Endothelial cell of umbilical vein (primary cell): ENCODE measurements at regions of chr18 and their contacts with region 1.

Region 1: GRCh38 chr18:48951448-48952286 is 902 bp upstream of the SMAD7 start:
- DNase-seq: peak; percentile 91
- H3K4me3 ChIP-seq: peak overlapping the region; percentile 58 to 83 (median 79)
- H3K27ac ChIP-seq: peak overlapping the region; percentile 97
- H3K4me1 ChIP-seq: peaks cover 47% of the 10 kb centered on the region
- H3K27me3 ChIP-seq: no peaks in the 10 kb centered on the region
- CTCF ChIP-seq: peak in 1 of 2 donors; percentile 28
- POLR2A ChIP-seq: peak; percentile 49

Region 2: GRCh38 chr18:48538531-48539405 is 412.9 kb before region 1 on chr18 and contains the start of gene CTIF:
- CTCF ChIA-PET with region 1: no interaction called
- POLR2A ChIA-PET with region 1: no interaction called
- dilution Hi-C with region 1: no loop called
- intact Hi-C with region 1: loop called (anchors 5 kb)
- DNase-seq: peak; percentile 96
- H3K4me3 ChIP-seq: peak within 1 kb of the TSS; percentile 73 to 86 (median 80)
- H3K27ac ChIP-seq: peak within 1 kb of the TSS; percentile 86
- H3K4me1 ChIP-seq: peaks cover 33% of the 10 kb centered on the region
- H3K27me3 ChIP-seq: no peaks in the 10 kb centered on the region
- CTCF ChIP-seq: no peak
- POLR2A ChIP-seq: peak; percentile 87
- total RNA-seq, gene CTIF: 49.4 and 57.7 TPM in 2 replicates

Region 3: GRCh38 chr18:48711651-48712486 is 239.8 kb before region 1 on chr18:
- CTCF ChIA-PET with region 1: interaction called, 6 read pairs
- POLR2A ChIA-PET with region 1: no interaction called
- dilution Hi-C with region 1: no loop called
- intact Hi-C with region 1: loop called (anchors 1 kb)
- DNase-seq: peak; percentile 51
- H3K4me3 ChIP-seq: no peak overlapping the region
- H3K27ac ChIP-seq: no peak overlapping the region
- H3K4me1 ChIP-seq: peaks cover 35% of the 10 kb centered on the region
- H3K27me3 ChIP-seq: no peaks in the 10 kb centered on the region
- CTCF ChIP-seq: peak; percentile 45 to 56
- POLR2A ChIP-seq: no peak

Region 4: GRCh38 chr18:48872234-48873145 is 79.2 kb before region 1 on chr18:
- CTCF ChIA-PET with region 1: no interaction called
- POLR2A ChIA-PET with region 1: no interaction called
- dilution Hi-C with region 1: no loop called
- intact Hi-C with region 1: loop called (anchors 2 kb)
- DNase-seq: no peak
- H3K4me3 ChIP-seq: no peak overlapping the region
- H3K27ac ChIP-seq: peak overlapping the region; percentile 36
- H3K4me1 ChIP-seq: peaks cover 8% of the 10 kb centered on the region
- H3K27me3 ChIP-seq: no peaks in the 10 kb centered on the region
- CTCF ChIP-seq: no peak
- POLR2A ChIP-seq: no peak

Region 5: GRCh38 chr18:48913201-48913600 is 38.5 kb before region 1 on chr18:
- CTCF ChIA-PET with region 1: no interaction called
- POLR2A ChIA-PET with region 1: no interaction called
- dilution Hi-C with region 1: no loop called
- intact Hi-C with region 1: no loop called
- DNase-seq: no peak
- H3K4me3 ChIP-seq: no peak overlapping the region
- H3K27ac ChIP-seq: no peak overlapping the region
- H3K4me1 ChIP-seq: no peaks in the 10 kb centered on the region
- H3K27me3 ChIP-seq: no peaks in the 10 kb centered on the region
- CTCF ChIP-seq: no peak
- POLR2A ChIP-seq: no peak

Region 6: DNA sequence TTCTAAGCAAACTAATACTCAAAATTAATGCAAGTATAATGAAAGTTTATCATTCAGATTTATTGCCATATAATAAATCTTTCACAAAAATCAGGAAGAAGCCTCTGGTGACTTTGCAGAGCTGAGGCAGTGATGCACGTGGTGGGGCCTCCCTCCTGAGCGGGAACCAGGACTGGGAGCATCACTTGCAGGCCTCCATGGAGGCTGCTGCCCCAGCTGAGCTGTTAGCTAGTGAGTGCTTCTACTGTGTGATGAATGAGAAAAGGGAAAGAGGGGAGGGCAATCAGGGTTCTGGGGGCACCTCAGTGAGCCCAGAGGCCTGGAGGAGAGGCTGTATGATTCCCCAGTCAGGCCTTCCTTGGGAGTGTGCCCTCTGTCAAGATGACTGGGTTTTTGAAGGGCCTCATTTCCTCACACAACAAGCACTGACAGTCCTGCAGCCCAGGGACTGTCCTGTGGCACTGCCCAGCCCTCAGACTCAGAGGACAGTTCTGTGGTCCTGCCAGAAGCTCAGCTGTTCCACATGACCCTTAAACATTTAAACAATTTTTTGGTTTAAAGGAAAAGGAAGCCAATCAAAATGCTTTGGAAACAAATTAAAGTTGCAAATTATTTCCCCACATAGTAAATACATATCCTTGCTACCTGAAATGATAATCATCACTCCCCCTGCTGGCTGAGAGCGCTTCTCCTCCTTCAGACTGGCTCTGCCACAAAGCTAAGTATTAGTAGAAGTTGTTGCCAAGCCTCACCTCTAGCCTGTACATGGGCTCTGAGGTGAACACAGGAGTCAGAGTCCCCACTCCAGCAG is 90.0 kb after region 1 on chr18:
- CTCF ChIA-PET with region 1: interaction called, 16 read pairs
- POLR2A ChIA-PET with region 1: no interaction called
- dilution Hi-C with region 1: no loop called
- intact Hi-C with region 1: loop called (anchors 5 kb)
- DNase-seq: peak; percentile 52
- H3K4me3 ChIP-seq: no peak overlapping the region
- H3K27ac ChIP-seq: no peak overlapping the region
- H3K4me1 ChIP-seq: no peaks in the 10 kb centered on the region
- H3K27me3 ChIP-seq: no peaks in the 10 kb centered on the region
- CTCF ChIP-seq: peak; percentile 45 to 53
- POLR2A ChIP-seq: no peak

Region 7: GRCh38 chr18:49238433-49239042 is 286.9 kb after region 1 on chr18:
- CTCF ChIA-PET with region 1: interaction called, 19 read pairs
- POLR2A ChIA-PET with region 1: no interaction called
- dilution Hi-C with region 1: no loop called
- intact Hi-C with region 1: loop called (anchors 5 kb)
- DNase-seq: peak; percentile 53
- H3K4me3 ChIP-seq: no peak overlapping the region
- H3K27ac ChIP-seq: no peak overlapping the region
- H3K4me1 ChIP-seq: peaks cover 3% of the 10 kb centered on the region
- H3K27me3 ChIP-seq: no peaks in the 10 kb centered on the region
- CTCF ChIP-seq: peak; percentile 42 to 48
- POLR2A ChIP-seq: no peak